Aorta (tissue), 5 donors: ENCODE measurements at regions of chr11 and their contacts with region 1.

Region 1: DNA sequence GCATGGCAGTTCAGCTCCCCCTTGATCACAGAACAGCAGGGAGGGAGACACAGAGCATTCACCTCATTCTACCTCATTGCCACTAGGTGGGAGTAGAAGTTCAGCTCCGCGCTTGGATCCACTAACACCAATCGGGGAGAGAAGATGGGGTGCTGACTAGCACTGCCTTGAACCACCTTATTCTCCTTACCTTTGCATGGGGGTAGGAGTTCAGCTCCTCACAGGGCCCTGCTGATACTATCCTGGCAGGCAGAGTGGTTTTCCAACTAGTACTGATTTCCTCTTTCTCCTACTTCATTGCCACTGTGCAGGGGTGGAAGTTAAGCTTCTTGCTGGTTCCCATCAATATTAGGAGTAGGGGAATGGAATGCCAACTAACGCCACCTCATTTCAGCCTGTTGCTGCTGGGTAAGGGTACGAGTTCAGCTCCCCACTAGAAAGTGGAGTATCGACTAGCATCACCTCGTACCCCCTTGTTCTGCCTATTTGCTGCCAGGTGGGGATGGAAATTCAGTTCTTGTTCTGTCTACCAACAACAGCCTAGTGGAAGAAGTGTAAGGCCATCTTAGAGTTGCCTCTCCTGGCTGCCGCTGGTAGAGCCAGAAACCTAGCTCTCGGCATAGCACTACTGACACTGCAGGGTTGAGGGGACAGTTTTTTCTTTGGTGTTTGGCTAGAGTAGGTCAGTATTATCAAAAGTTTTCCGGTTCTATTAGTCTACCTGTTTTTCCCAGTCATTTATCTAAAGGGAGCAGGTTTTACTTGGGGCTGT is 550.9 kb upstream of the CCDC90B start:
- DNase-seq: no peak
- ATAC-seq: peak; percentile 79
- H3K4me3 ChIP-seq: no peak overlapping the region
- H3K27ac ChIP-seq: no peak overlapping the region
- H3K4me1 ChIP-seq: no peaks in the 10 kb centered on the region
- H3K27me3 ChIP-seq: peaks cover 0 to 2% of the 10 kb centered on the region in 2 donors

Region 2: DNA sequence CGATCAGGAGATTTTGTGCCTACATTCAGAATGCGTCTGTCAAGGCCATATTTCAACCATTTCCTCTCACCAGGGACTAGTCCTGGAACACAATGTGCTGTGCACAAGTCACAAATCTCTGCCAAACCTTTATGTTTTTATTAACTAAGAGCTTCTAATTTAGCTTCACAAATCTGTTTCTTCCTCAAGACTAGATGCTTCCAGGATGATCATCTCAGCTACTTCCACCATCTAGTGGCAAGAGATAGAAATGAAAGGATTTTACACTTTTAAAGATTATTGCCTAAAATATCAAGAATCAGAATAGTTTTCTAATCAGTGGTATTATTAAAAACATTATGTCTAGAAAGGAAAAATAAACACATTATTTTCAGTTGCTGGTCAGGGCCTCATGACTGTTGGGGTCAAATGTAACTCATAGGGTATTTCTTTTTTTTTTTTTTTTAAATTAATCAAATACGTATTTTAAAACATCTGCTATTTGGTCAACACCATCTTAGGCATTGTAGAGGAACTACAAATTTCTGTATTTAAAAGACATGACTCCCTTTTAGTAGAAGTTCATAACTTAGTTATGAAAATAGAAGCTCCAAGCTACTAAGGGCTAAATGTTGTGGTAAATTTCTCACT is 687.5 kb after region 1 on chr11:
- intact Hi-C with region 1: loop called (anchors 5 to 10 kb)
- DNase-seq: no peak
- ATAC-seq: peak; percentile 52
- H3K4me3 ChIP-seq: no peak overlapping the region
- H3K27ac ChIP-seq: no peak overlapping the region
- H3K4me1 ChIP-seq: no peaks in the 10 kb centered on the region
- H3K27me3 ChIP-seq: no peaks in the 10 kb centered on the region

Region 3: DNA sequence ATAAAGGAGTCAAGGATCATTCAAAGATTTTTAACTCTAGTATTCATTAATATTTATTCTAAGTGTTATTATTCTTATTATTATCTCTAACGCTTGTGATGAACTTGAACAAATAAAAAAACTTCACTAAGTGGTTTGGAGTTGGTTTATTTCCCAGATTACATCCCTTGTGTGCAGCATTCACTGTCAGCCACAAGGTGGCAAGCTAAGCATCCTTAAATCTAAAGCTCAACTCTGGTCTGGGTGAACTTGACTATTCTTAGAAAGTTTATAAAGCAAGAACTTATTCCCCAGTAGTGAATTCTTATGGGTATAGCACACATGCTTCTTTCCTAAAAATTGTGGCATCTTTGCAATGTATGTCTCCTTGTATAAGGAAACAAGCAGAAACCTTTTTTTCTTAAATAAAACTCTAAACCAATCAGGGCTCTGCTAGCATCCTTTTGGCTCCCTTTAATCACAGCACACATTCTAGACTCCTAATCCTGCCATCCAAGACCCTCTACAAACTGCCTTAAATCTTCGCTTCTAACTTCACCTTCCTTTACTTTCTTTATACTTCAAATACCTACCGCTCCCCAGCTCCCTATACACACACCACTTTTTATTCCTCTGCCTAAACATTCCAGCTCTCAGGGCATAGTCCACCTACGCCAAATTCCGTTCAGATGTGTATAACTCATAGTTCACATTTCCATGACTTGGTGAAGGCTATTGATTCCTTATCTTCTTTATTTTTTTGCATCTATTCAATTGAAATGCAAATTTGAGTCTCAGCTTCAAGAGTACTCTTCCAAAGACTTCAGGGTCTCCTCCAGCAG is 721.2 kb after region 1 on chr11:
- intact Hi-C with region 1: loop called (anchors 10 kb)
- DNase-seq: no peak
- ATAC-seq: peak; percentile 68
- H3K4me3 ChIP-seq: no peak overlapping the region
- H3K27ac ChIP-seq: no peak overlapping the region
- H3K4me1 ChIP-seq: no peaks in the 10 kb centered on the region
- H3K27me3 ChIP-seq: no peaks in the 10 kb centered on the region

Region 4: DNA sequence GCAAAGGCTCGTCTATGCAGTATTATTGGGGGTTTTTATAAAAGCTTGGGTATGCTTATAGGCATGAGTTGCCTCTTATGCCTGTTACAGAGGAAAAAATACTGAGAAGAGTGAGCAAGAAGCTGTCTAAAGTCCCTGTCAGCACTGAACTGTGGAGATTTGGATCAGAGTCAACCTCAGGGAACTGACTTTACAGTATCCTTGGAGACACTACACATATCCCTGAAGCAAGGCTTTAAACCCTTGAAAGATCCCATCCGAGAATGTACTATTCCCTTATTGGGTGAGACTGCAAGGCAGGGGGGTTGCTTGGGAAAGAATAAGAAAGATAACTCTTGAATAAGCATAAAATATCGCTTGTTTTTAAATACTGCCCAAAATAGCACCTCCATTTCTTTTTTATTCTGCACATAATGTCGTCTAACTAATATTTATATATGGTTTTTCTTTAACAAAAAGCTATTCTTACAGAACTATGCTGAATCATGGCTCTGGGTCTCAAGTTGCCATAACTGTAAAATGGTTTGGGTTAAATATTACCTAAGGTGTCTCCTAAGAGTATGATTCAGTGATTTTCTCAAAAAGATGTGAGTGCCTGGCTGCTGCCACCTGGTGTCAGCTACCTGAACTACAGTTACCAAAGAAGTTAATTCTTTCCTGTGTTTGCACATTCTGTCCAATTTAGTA is 727.3 kb after region 1 on chr11:
- intact Hi-C with region 1: loop called (anchors 10 kb)
- DNase-seq: peak in 1 of 2 donors; percentile 64
- ATAC-seq: no peak
- H3K4me3 ChIP-seq: no peak overlapping the region
- H3K27ac ChIP-seq: no peak overlapping the region
- H3K4me1 ChIP-seq: no peaks in the 10 kb centered on the region
- H3K27me3 ChIP-seq: no peaks in the 10 kb centered on the region